ENCODE measurements at regions of chr6 and their contacts with region 1.

Region 1: DNA sequence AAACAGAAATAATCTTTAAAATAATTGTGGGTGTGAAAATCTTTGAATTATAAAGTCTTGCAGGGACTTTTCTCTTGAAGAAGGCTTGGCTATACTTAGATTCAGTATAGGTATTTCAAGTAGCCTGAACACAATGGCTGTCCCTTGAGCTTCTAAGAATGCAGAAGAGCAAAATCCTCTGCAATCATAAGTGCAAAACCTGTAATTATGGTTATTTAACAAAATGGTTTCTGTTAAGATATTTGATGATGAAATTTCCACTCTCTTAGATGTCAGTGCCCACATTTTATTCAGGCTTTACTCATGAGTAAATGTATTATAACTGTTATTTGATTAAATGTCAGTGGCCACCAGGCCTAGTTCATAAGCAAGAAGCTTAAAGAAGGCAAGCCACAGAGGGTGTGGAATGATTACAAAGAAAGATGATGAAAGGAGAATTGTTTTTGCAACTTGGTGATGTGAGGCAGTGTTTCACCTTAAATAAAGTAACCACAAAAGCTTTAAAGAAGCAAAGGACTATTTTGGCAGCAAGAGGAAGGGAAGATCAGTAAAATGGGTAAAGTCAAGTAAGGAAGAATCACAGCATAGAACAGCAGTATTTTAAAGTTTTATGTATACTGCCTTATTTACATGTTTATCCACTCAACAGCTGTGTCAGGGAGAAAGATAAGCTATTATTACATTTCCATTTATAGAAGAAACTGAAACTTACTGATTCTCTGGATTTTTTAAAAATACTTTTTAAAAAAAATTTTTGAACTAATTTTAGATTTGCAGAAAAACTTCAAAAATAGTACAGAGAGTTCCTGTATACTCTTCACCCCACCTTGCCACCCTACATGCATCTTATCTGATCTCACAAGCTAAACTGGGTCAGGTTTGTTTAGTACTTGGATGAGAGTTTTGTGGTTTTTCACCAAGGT is 351.1 kb upstream of the RUNX2 start:
- DNase-seq: peak in 7 of 9 donors; percentile 57 to 84 (median 73)
- ATAC-seq: peak; percentile 93
- H3K4me3 ChIP-seq: no peak overlapping the region
- H3K4me3 Mint-ChIP-seq: peak overlapping the region; percentile 23 to 74 (median 58)
- H3K27ac ChIP-seq: peak overlapping the region; percentile 18
- H3K27ac Mint-ChIP-seq: peak overlapping the region; percentile 20 to 88 (median 80)
- H3K4me1 ChIP-seq: peaks cover 6 to 23% of the 10 kb centered on the region in 2 donors
- H3K4me1 Mint-ChIP-seq: peaks cover 8 to 76% (median 47%) of the 10 kb centered on the region in 7 donors
- H3K27me3 ChIP-seq: no peaks in the 10 kb centered on the region
- H3K27me3 Mint-ChIP-seq: no peaks in the 10 kb centered on the region

Region 2: DNA sequence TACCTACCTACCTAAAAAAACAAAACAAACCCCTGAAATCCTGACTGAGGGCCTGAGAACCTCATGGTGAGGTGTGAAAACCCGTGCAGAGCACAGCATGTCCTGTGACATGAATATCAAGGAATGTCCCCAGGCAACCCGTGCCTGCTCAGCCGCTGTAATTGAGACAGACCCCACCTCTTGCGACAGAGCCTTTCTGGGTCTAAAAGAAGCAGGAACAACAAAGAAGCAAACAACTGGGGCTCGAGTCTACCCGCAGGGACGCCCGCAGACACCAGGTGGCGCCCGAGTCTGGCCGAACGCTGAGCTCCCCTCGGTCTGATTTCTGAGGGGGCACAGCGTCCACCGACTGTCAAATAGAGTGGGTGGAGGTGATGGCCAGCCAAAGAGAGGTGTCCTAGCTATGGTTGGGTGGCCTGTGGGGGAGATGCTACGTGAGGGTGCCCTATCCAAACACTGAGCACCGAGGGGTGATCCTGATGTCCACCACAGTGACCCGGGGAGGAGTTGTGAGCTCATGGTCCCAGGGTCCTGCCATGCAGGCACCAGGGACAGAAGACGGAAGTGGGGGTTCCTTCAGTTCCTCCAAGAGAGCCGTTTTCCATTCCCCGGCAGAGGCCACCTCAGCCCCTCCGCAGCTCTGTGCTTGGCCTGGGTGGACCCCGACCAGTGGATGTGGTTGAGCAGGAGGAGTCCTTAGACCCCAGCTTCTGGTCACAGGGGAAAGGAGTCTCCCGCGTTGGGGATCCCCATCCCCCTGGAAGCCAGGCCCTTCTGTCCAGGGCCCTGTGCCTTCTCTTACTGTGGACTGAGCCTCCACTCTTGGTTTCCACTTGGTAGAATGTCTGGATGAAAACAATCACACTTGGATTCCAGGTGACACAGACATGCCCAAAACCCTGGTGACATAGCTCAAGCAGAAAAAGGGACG is 321.3 kb before region 1 on chr6:
- CTCF ChIA-PET with region 1: interaction called, 3 read pairs
- POLR2A ChIA-PET with region 1: no interaction called
- intact Hi-C with region 1: loop called in 1 of 2 experiments (anchors 5 kb)
- DNase-seq: peak; percentile 33 to 79 (median 65)
- ATAC-seq: peak; percentile 84
- H3K4me3 ChIP-seq: no peak overlapping the region
- H3K4me3 Mint-ChIP-seq: peak overlapping the region in 8 of 10 donors; percentile 26 to 72 (median 64)
- H3K27ac ChIP-seq: no peak overlapping the region
- H3K27ac Mint-ChIP-seq: peak overlapping the region; percentile 37 to 96 (median 79)
- H3K4me1 ChIP-seq: peaks cover 0 to 9% of the 10 kb centered on the region in 2 donors
- H3K4me1 Mint-ChIP-seq: peaks cover 6 to 16% (median 10%) of the 10 kb centered on the region in 7 donors
- H3K27me3 ChIP-seq: no peaks in the 10 kb centered on the region
- H3K27me3 Mint-ChIP-seq: peaks cover 0 to 12% (median 2%) of the 10 kb centered on the region in 5 donors

Region 3: GRCh38 chr6:44858998-44859397 is 118.0 kb before region 1 on chr6:
- CTCF ChIA-PET with region 1: no interaction called
- POLR2A ChIA-PET with region 1: interaction called, 3 read pairs
- intact Hi-C with region 1: loop called in 1 of 2 experiments (anchors 1 kb)
- DNase-seq: peak in 5 of 9 donors; percentile 13 to 39 (median 15)
- ATAC-seq: peak; percentile 50
- H3K4me3 ChIP-seq: no peak overlapping the region
- H3K4me3 Mint-ChIP-seq: no peak overlapping the region
- H3K27ac ChIP-seq: no peak overlapping the region
- H3K27ac Mint-ChIP-seq: peak overlapping the region in 1 of 9 donors; percentile 4
- H3K4me1 ChIP-seq: peaks cover 0 to 13% of the 10 kb centered on the region in 2 donors
- H3K4me1 Mint-ChIP-seq: peaks cover 17 to 76% (median 60%) of the 10 kb centered on the region in 7 donors
- H3K27me3 ChIP-seq: no peaks in the 10 kb centered on the region
- H3K27me3 Mint-ChIP-seq: no peaks in the 10 kb centered on the region

Region 4: DNA sequence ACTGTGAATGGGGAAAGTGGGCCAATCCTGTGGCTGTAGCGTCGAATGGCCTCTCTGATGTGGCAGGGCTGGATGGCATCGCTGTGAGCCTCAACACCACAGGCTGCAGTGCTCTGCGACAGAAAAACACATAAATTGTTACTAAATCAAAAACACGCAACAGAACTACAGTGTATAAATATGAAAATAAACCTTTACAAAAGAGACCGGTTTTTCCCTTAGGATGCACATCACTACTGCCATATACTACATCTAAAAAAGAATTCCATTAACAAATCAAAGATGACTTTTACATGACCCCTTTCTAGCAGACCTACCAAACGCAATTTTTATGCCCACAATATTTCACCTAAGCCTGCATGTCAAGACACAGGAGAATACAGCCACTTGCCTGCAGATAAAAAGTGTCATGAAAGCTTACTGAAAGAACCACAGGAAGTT is 44.3 kb before region 1 on chr6:
- CTCF ChIA-PET with region 1: interaction called, 3 read pairs
- POLR2A ChIA-PET with region 1: interaction called, 6 read pairs
- intact Hi-C with region 1: loop called (anchors 1 to 2 kb)
- DNase-seq: peak in 7 of 9 donors; percentile 46 to 66 (median 58)
- ATAC-seq: peak; percentile 91
- H3K4me3 ChIP-seq: peak overlapping the region; percentile 37
- H3K4me3 Mint-ChIP-seq: peak overlapping the region; percentile 78 to 98 (median 88)
- H3K27ac ChIP-seq: peak overlapping the region; percentile 71
- H3K27ac Mint-ChIP-seq: peak overlapping the region; percentile 92 to 99 (median 96)
- H3K4me1 ChIP-seq: peaks cover 17 to 42% of the 10 kb centered on the region in 2 donors
- H3K4me1 Mint-ChIP-seq: peaks cover 26 to 67% (median 60%) of the 10 kb centered on the region in 7 donors
- H3K27me3 ChIP-seq: no peaks in the 10 kb centered on the region
- H3K27me3 Mint-ChIP-seq: no peaks in the 10 kb centered on the region

Region 5: GRCh38 chr6:45001663-45002062 is 24.7 kb after region 1 on chr6:
- CTCF ChIA-PET with region 1: no interaction called
- POLR2A ChIA-PET with region 1: interaction called, 4 read pairs
- intact Hi-C with region 1: loop called (anchors 1 to 2 kb)
- DNase-seq: peak in 3 of 9 donors; percentile 19 to 22 (median 21)
- ATAC-seq: peak; percentile 74
- H3K4me3 ChIP-seq: no peak overlapping the region
- H3K4me3 Mint-ChIP-seq: peak overlapping the region in 5 of 10 donors; percentile 8 to 49 (median 13)
- H3K27ac ChIP-seq: peak overlapping the region; percentile 2
- H3K27ac Mint-ChIP-seq: peak overlapping the region in 7 of 9 donors; percentile 14 to 87 (median 59)
- H3K4me1 ChIP-seq: peaks cover 4 to 7% of the 10 kb centered on the region in 2 donors
- H3K4me1 Mint-ChIP-seq: peaks cover 7 to 36% (median 26%) of the 10 kb centered on the region in 7 donors
- H3K27me3 ChIP-seq: no peaks in the 10 kb centered on the region
- H3K27me3 Mint-ChIP-seq: no peaks in the 10 kb centered on the region

Region 6: DNA sequence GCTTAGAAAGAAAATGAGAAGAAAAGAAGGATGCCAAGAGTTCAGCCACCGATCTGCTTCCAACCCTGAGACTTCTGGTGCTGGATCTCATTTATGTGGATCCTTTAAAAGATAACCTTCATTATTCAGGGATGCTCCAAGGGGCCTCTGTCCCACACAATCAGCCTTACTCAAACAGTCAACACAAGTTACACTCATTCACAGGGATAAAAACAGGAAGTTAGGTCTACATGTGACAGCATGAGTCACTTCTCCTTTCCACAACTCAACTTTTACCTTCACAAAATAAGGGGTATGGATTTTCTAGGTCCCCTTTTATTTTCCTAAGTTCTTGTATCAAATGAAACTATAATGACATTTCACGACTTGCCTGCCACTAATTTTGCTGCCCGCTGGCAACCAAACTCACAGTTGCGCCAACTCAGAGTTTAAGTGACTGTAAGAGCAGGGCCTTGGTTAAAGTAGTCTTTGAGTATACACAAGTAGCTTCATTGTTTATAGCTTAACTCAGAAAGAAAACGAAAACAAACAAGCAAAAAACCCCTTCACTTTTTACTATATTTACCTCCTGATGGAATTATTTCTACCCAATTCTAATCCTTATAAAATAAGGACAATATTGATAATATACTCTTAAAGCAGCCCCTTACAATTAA is 72.3 kb after region 1 on chr6:
- CTCF ChIA-PET with region 1: no interaction called
- POLR2A ChIA-PET with region 1: no interaction called
- intact Hi-C with region 1: loop called in 1 of 2 experiments (anchors 5 kb)
- DNase-seq: no peak
- ATAC-seq: peak; percentile 78
- H3K4me3 ChIP-seq: no peak overlapping the region
- H3K4me3 Mint-ChIP-seq: peak overlapping the region in 3 of 10 donors; percentile 15 to 60 (median 27)
- H3K27ac ChIP-seq: no peak overlapping the region
- H3K27ac Mint-ChIP-seq: peak overlapping the region in 4 of 9 donors; percentile 8 to 78 (median 63)
- H3K4me1 ChIP-seq: no peaks in the 10 kb centered on the region
- H3K4me1 Mint-ChIP-seq: peaks cover 16 to 37% (median 32%) of the 10 kb centered on the region in 7 donors
- H3K27me3 ChIP-seq: no peaks in the 10 kb centered on the region
- H3K27me3 Mint-ChIP-seq: peaks cover 0 to 4% (median 0%) of the 10 kb centered on the region in 5 donors

Region 7: DNA sequence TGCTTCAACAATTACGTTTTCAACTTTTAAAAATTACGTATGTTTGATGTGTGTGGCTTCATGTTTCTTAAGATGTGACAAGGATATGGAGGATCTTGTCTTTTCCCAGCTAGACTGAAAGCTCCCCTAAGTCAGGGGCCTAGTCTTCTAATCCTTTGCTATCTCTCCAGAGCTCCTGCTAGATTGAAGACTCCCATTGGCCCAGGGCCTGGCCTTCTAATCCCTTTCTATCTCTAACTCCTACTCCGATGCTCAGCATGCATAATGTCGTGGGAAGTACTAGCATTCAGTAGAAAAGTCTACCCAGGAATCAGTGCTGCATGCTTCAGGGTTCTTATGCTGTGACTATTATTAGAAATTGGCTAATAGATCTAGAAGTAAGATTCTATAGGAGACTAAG is 545.5 kb after region 1 on chr6:
- CTCF ChIA-PET with region 1: no interaction called
- POLR2A ChIA-PET with region 1: no interaction called
- intact Hi-C with region 1: no loop called
- DNase-seq: no peak
- ATAC-seq: no peak
- H3K4me3 ChIP-seq: no peak overlapping the region
- H3K4me3 Mint-ChIP-seq: no peak overlapping the region
- H3K27ac ChIP-seq: no peak overlapping the region
- H3K27ac Mint-ChIP-seq: no peak overlapping the region
- H3K4me1 ChIP-seq: no peaks in the 10 kb centered on the region
- H3K4me1 Mint-ChIP-seq: peaks cover 8 to 18% (median 15%) of the 10 kb centered on the region in 7 donors
- H3K27me3 ChIP-seq: no peaks in the 10 kb centered on the region
- H3K27me3 Mint-ChIP-seq: no peaks in the 10 kb centered on the region

Region 8: GRCh38 chr6:45586216-45587171 is 609.5 kb after region 1 on chr6:
- CTCF ChIA-PET with region 1: no interaction called
- POLR2A ChIA-PET with region 1: no interaction called
- intact Hi-C with region 1: loop called in 1 of 2 experiments (anchors 5 kb)
- DNase-seq: peak; percentile 11 to 93 (median 86)
- ATAC-seq: peak; percentile 93
- H3K4me3 ChIP-seq: peak overlapping the region; percentile 4
- H3K4me3 Mint-ChIP-seq: peak overlapping the region; percentile 76 to 89 (median 81)
- H3K27ac ChIP-seq: peak overlapping the region; percentile 9
- H3K27ac Mint-ChIP-seq: peak overlapping the region; percentile 59 to 97 (median 89)
- H3K4me1 ChIP-seq: peaks cover 48 to 67% of the 10 kb centered on the region in 2 donors
- H3K4me1 Mint-ChIP-seq: peaks cover 40 to 70% (median 69%) of the 10 kb centered on the region in 7 donors
- H3K27me3 ChIP-seq: no peaks in the 10 kb centered on the region
- H3K27me3 Mint-ChIP-seq: no peaks in the 10 kb centered on the region

Measured in naive thymus-derived CD4-positive, alpha-beta T cell (primary cell).